ENCODE measurements at regions of chr20 and their contacts with region 1.

Region 1: DNA sequence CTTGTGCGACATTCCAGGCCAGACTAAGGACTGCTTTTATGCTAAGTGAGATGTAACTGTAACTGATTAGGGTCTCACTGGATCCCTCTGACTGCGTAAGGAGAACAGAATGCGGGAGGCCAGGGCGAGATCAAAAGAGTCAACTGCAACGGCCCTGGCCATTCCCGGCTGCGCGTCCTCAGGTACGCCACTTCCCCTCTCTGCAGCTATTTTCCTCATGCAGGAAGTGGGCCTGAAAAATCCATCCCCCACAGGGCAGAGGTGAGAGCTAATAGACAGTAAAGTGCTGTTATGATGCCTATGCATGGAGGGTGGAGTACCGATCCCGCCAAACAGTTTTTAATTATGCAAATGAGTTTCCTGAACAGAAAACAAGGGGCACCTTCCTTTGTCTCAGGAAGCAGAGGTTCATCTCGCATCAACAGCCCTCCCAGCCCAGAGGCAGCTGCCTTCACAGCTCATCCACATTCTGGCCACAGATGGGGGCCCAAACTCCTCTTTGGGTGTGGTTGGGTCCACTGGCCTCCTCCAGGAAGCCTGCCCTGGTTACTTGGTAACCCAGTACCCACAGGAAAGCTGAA is 9.3 kb downstream of the PREX1 start:
- DNase-seq: no peak
- ATAC-seq: peak; percentile 49
- H3K4me3 Mint-ChIP-seq: peak overlapping the region; percentile 63
- H3K27ac Mint-ChIP-seq: peak overlapping the region; percentile 89
- H3K4me1 Mint-ChIP-seq: no peaks in the 10 kb centered on the region
- H3K27me3 Mint-ChIP-seq: no peaks in the 10 kb centered on the region
- CTCF ChIP-seq: no peak

Region 2: DNA sequence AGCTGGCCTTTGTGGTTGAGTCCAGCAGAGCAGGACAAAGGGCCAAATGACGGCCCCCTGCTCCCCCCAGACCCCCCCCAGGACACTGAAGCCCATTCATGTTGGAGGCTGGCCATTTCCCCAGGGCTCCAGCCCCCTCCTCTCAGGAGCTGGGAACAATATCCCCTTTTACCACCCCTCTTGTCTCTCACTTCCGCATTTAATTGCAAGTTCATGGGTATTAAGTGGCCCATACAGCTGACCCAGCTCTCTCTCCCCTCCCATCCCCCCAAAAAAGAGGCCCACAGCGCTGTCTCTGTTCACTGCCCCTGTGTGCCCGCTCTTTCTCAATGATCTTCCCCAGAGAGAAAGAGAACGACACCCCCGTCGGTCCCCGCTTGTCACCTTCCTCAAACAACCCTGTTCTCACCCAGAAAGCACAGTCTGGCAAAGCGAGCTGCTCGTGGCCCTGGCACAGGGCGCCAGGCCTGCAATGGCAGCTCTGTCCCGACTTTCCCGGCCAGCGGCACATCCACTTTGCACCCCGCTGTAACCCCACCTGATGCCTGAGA is 21.1 kb before region 1 on chr20:
- CTCF ChIA-PET with region 1: no interaction called
- POLR2A ChIA-PET with region 1: interaction called, 3 read pairs
- intact Hi-C with region 1: loop called (anchors 2 kb)
- DNase-seq: no peak
- ATAC-seq: peak; percentile 45
- H3K4me3 Mint-ChIP-seq: no peak overlapping the region
- H3K27ac Mint-ChIP-seq: peak overlapping the region; percentile 70
- H3K4me1 Mint-ChIP-seq: peaks cover 71% of the 10 kb centered on the region
- H3K27me3 Mint-ChIP-seq: no peaks in the 10 kb centered on the region
- CTCF ChIP-seq: no peak

Measured in activated B cell treated with CpG ODN at 0.5 μM for 24 hours (primary cell).